ENCODE measurements at regions of chr6 and their contacts with region 1.

Region 1: DNA sequence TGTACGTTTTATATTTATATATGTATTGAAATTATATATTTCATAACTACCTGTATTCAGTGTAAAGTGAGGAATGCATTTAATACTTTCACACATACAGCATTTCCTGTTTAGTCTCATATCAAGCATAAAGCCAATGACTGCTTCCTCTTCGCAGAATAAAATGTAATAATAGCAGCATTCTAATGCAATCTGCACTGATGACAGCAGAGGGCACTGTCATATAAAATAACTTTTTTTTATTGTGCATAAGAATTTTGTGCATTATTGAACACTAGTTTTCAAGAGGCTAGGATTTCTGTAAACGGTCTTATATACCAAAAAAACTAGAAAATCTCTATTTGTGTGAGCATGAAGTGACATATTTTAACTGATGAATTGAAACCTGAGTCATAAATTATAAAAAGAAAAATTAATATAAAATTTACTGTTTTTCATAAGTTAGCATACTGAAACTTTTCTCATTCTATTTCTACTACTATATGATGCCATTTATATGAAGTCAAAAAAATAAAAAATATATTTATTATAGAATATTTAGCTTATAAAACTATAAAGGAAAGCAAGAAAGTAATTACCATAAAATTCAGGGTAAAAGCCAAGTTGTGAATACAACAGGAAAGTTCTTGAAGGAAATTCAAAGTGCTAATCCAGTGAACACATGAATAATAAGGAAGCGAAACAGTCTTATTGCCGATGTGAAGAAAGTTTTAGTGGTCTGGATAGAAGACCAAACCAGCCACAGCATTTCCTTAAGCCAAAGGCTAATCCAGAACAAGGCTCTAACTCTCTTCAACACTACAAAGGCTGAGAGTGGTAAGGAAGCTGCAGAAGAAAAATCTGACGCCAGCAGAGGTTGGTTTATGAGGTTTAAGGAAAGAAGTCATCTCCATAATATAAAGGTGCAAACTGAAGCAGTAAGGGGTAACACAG is 36.3 kb downstream of the RNF146 start:
- H3K4me3 ChIP-seq: no peak overlapping the region
- H3K27ac ChIP-seq: no peak overlapping the region
- H3K4me1 ChIP-seq: no peaks in the 10 kb centered on the region
- CTCF ChIP-seq: no peak

Region 2: DNA sequence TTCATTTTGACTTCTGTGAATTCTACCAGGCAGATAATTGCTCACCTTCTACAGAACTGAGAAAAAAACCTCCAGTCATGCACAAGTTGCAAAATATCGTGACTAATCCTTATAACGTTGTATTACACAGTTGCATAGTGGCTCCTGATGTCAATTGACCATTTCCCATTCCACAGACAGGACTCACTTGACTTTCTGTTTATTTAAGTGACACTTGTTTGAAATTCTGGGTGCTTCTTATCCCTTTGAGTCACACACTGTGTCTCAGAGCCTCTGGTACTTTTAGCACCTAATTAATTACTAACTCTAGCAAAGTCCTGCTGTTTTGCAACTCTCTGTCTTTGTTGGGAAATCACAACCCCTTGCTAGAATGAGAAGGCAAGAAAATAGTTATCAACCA is 200.7 kb before region 1 on chr6:
- CTCF ChIA-PET with region 1: no interaction called
- POLR2A ChIA-PET with region 1: no interaction called
- H3K4me3 ChIP-seq: no peak overlapping the region
- H3K27ac ChIP-seq: no peak overlapping the region
- H3K4me1 ChIP-seq: no peaks in the 10 kb centered on the region
- CTCF ChIP-seq: no peak

Region 3: GRCh38 chr6:127420556-127420955 is 117.6 kb after region 1 on chr6:
- CTCF ChIA-PET with region 1: interaction called, 32 read pairs
- POLR2A ChIA-PET with region 1: interaction called, 3 read pairs
- H3K4me3 ChIP-seq: no peak overlapping the region
- H3K27ac ChIP-seq: no peak overlapping the region
- H3K4me1 ChIP-seq: no peaks in the 10 kb centered on the region
- CTCF ChIP-seq: peak; percentile 33; the same call in 1 of the 2 replicates